IMR-90 (cell line): ENCODE measurements at regions of chr16 and their contacts with region 1.

Region 1: GRCh38 chr16:67641779-67642708 is 2.9 kb upstream of the CARMIL2 start:
- DNase-seq: peak; percentile 33
- ATAC-seq: peak; percentile 66
- H3K4me3 ChIP-seq: no peak overlapping the region
- H3K27ac ChIP-seq: no peak overlapping the region
- H3K4me1 ChIP-seq: peaks cover 5% of the 10 kb centered on the region; the same call in 1 of the 2 replicates
- H3K27me3 ChIP-seq: peaks cover 27% of the 10 kb centered on the region
- CTCF ChIP-seq: no peak
- POLR2A ChIP-seq: no peak
- RAD21 ChIP-seq: no peak

Region 2: DNA sequence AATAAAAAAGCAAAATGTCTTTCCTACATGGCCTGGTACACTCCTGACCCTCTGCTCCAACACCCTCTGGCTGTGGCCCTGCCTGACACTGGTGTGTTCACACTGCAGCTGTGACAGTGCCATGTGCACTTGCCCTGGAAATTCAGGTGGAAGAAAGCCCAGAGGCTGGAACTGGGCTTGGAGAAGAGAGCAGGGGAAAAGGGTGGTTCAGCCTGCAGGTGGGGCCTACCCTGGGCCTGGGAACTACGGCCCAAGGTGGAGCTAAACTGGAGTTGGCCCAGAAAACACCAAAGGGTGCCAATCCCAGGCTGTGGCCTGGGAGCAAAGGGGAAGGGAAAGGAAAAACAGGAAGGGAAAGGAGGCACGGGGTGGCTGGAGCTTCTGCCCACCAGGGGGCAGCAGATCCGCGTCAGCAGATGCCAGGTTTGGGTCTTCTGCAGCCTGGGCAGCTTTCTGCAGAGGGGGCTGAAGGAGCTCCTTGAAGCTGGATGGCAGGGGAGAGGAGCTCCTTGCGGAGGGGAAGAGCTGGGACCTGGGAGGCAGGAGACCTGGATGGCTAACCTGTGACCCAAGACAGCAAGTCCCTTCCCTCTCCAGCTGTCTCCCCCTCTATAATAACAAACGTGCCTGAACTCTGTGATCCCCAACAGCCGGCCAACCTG is 95.2 kb before region 1 on chr16:
- CTCF ChIA-PET with region 1: interaction called, 5 read pairs
- POLR2A ChIA-PET with region 1: no interaction called
- dilution Hi-C with region 1: no loop called
- in situ Hi-C with region 1: no loop called
- intact Hi-C with region 1: loop called (anchors 1 kb)
- DNase-seq: peak; percentile 57
- ATAC-seq: peak; percentile 70
- H3K4me3 ChIP-seq: no peak overlapping the region
- H3K27ac ChIP-seq: no peak overlapping the region
- H3K4me1 ChIP-seq: no peaks in the 10 kb centered on the region
- H3K27me3 ChIP-seq: no peaks in the 10 kb centered on the region
- CTCF ChIP-seq: peak; percentile 91
- POLR2A ChIP-seq: no peak
- RAD21 ChIP-seq: peak; percentile 87

Region 3: GRCh38 chr16:67608364-67608763 is 33.7 kb before region 1 on chr16:
- CTCF ChIA-PET with region 1: no interaction called
- POLR2A ChIA-PET with region 1: no interaction called
- dilution Hi-C with region 1: no loop called
- in situ Hi-C with region 1: no loop called
- intact Hi-C with region 1: loop called (anchors 5 kb)
- DNase-seq: peak; percentile 12
- ATAC-seq: peak; percentile 42
- H3K4me3 ChIP-seq: no peak overlapping the region
- H3K27ac ChIP-seq: no peak overlapping the region
- H3K4me1 ChIP-seq: peaks cover 3% of the 10 kb centered on the region; the same call in 1 of the 2 replicates
- H3K27me3 ChIP-seq: no peaks in the 10 kb centered on the region
- CTCF ChIP-seq: no peak
- POLR2A ChIP-seq: no peak
- RAD21 ChIP-seq: no peak